Activated CD4-positive, alpha-beta T cell treated with anti-CD3 and anti-CD28 coated beads for 36 hours (primary cell): ENCODE measurements at regions of chr6 and their contacts with region 1.

Region 1: GRCh38 chr6:73329201-73329600 is 24.9 kb downstream of the DPPA5 start:
- DNase-seq: peak; percentile 20
- ATAC-seq: peak; percentile 66
- H3K4me3 Mint-ChIP-seq: no peak overlapping the region
- H3K27ac Mint-ChIP-seq: no peak overlapping the region
- H3K4me1 Mint-ChIP-seq: no peaks in the 10 kb centered on the region
- H3K27me3 Mint-ChIP-seq: peaks cover 13% of the 10 kb centered on the region

Region 2: GRCh38 chr6:71533939-71534379 is 1795.2 kb before region 1 on chr6:
- CTCF ChIA-PET with region 1: interaction called, 3 read pairs
- POLR2A ChIA-PET with region 1: no interaction called
- intact Hi-C with region 1: loop called in 1 of 2 experiments (anchors 5 kb)
- DNase-seq: no peak
- ATAC-seq: no peak
- H3K4me3 Mint-ChIP-seq: no peak overlapping the region
- H3K27ac Mint-ChIP-seq: no peak overlapping the region
- H3K4me1 Mint-ChIP-seq: no peaks in the 10 kb centered on the region
- H3K27me3 Mint-ChIP-seq: no peaks in the 10 kb centered on the region

Region 3: GRCh38 chr6:72411872-72412708 is 917.1 kb before region 1 on chr6:
- CTCF ChIA-PET with region 1: interaction called, 6 read pairs
- POLR2A ChIA-PET with region 1: no interaction called
- intact Hi-C with region 1: loop called (anchors 1 to 5 kb)
- DNase-seq: peak; percentile 80
- ATAC-seq: peak; percentile 90
- H3K4me3 Mint-ChIP-seq: no peak overlapping the region
- H3K27ac Mint-ChIP-seq: no peak overlapping the region
- H3K4me1 Mint-ChIP-seq: no peaks in the 10 kb centered on the region
- H3K27me3 Mint-ChIP-seq: peaks cover 5% of the 10 kb centered on the region

Region 4: GRCh38 chr6:73129653-73130443 is 199.4 kb before region 1 on chr6:
- CTCF ChIA-PET with region 1: interaction called, 7 read pairs
- POLR2A ChIA-PET with region 1: no interaction called
- intact Hi-C with region 1: loop called (anchors 5 to 10 kb)
- DNase-seq: peak; percentile 91
- ATAC-seq: peak; percentile 98
- H3K4me3 Mint-ChIP-seq: no peak overlapping the region
- H3K27ac Mint-ChIP-seq: no peak overlapping the region
- H3K4me1 Mint-ChIP-seq: peaks cover 4% of the 10 kb centered on the region
- H3K27me3 Mint-ChIP-seq: peaks cover 10% of the 10 kb centered on the region

Region 5: GRCh38 chr6:73285674-73286283 is 43.4 kb before region 1 on chr6:
- CTCF ChIA-PET with region 1: interaction called, 31 read pairs
- POLR2A ChIA-PET with region 1: no interaction called
- intact Hi-C with region 1: loop called (anchors 1 kb)
- DNase-seq: no peak
- ATAC-seq: peak; percentile 33
- H3K4me3 Mint-ChIP-seq: no peak overlapping the region
- H3K27ac Mint-ChIP-seq: no peak overlapping the region
- H3K4me1 Mint-ChIP-seq: no peaks in the 10 kb centered on the region
- H3K27me3 Mint-ChIP-seq: no peaks in the 10 kb centered on the region

Region 6: GRCh38 chr6:73309769-73310502 is 19.3 kb before region 1 on chr6:
- CTCF ChIA-PET with region 1: interaction called, 11 read pairs
- POLR2A ChIA-PET with region 1: interaction called, 3 read pairs
- intact Hi-C with region 1: no loop called
- DNase-seq: peak; percentile 79
- ATAC-seq: peak; percentile 90
- H3K4me3 Mint-ChIP-seq: peak overlapping the region; percentile 90
- H3K27ac Mint-ChIP-seq: peak overlapping the region; percentile 88
- H3K4me1 Mint-ChIP-seq: peaks cover 20% of the 10 kb centered on the region
- H3K27me3 Mint-ChIP-seq: peaks cover 28% of the 10 kb centered on the region

Region 7: GRCh38 chr6:73339347-73339746 is 10.1 kb after region 1 on chr6:
- CTCF ChIA-PET with region 1: interaction called, 12 read pairs
- POLR2A ChIA-PET with region 1: no interaction called
- intact Hi-C with region 1: no loop called
- DNase-seq: no peak
- ATAC-seq: no peak
- H3K4me3 Mint-ChIP-seq: no peak overlapping the region
- H3K27ac Mint-ChIP-seq: no peak overlapping the region
- H3K4me1 Mint-ChIP-seq: no peaks in the 10 kb centered on the region
- H3K27me3 Mint-ChIP-seq: no peaks in the 10 kb centered on the region